ENCODE measurements at regions of chr17 and their contacts with region 1.

Region 1: DNA sequence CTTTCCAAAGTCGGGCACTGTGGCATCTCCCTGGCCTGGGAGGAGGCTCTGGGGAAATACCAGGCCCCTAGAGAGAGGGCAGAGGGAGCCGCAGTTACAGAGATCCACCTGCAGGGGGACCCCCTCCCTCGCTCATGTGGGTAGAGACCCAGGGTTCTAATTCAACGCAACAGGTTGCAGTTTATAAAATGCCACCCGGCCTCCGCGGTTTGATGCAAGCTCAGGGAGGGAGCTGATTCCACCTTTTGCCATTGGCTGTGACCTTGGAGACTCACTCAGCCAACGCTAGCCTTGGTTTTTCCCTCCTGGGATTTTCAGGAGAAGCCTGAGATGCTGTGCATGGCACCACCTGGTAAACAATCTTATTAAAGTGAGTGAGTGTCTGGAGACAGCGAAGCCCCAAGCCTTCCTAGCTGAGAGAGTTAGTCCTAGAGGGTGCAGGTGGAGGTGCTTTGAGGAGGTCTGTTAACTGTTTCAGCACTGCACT is 12.1 kb downstream of the TTLL6 start:
- DNase-seq: peak; percentile 18
- H3K4me3 ChIP-seq: no peak overlapping the region
- CTCF ChIP-seq: peak; percentile 97

Region 2: GRCh38 chr17:48767263-48767774 is 37.6 kb before region 1 on chr17:
- in situ Hi-C with region 1: no loop called
- DNase-seq: no peak
- H3K4me3 ChIP-seq: no peak overlapping the region
- CTCF ChIP-seq: no peak

Region 3: DNA sequence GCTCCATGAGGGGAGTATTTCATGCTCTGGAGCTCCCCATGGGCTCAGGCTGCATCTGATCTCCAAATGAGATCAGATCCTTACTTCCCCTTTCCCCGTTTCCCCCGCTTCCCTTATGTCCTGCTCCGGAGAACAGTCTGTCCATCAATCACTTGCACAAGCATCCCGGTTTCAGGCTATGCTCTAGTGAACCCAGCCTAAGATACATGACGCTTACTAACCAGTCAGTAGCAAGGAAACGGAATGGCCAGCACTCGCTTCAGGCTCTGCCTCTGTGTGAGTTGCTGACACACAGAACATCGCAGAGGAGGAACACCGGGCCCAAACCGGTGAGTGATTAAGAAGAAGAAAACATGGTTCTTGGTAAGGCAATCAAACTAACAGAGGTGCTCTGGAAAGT is 78.2 kb after region 1 on chr17:
- in situ Hi-C with region 1: loop called (anchors 5 kb)
- DNase-seq: no peak
- H3K4me3 ChIP-seq: no peak overlapping the region
- CTCF ChIP-seq: no peak